ENCODE measurements at regions of chr12 and their contacts with region 1.

Region 1: GRCh38 chr12:21989819-21990412 is 48.7 kb upstream of the ABCC9 start:
- DNase-seq: peak; percentile 41
- H3K4me3 ChIP-seq: no peak overlapping the region
- H3K27ac ChIP-seq: no peak overlapping the region
- H3K4me1 ChIP-seq: peaks cover 9% of the 10 kb centered on the region
- H3K27me3 ChIP-seq: peaks cover 0 to 3% of the 10 kb centered on the region in 2 experiments
- CTCF ChIP-seq: peak; percentile 28 to 38
- POLR2A ChIP-seq: no peak

Region 2: GRCh38 chr12:21248679-21249078 is 741.2 kb before region 1 on chr12:
- CTCF ChIA-PET with region 1: interaction called, 11 read pairs
- POLR2A ChIA-PET with region 1: no interaction called
- dilution Hi-C with region 1: no loop called
- intact Hi-C with region 1: no loop called
- DNase-seq: peak; percentile 22
- H3K4me3 ChIP-seq: no peak overlapping the region
- H3K27ac ChIP-seq: no peak overlapping the region
- H3K4me1 ChIP-seq: no peaks in the 10 kb centered on the region
- H3K27me3 ChIP-seq: no peaks in the 10 kb centered on the region
- CTCF ChIP-seq: no peak
- POLR2A ChIP-seq: no peak

Region 3: DNA sequence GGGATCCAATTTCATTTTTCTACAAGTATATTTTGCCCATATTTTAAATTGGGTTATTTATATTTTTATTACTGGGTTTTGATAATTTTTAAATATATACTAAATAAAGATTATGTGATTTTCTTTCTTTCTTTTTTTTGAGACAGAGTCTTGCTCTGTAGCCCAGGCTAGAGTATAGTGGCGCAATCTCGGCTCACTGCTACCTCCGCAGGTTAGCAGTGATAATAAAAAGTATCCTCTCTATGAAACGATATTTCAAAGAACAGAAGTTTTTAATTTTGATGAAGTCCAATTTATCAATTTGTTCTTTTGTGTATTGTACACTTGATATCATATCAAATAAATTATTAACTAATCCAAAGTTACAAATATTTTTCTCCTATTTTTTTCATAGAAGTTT is 285.1 kb before region 1 on chr12:
- CTCF ChIA-PET with region 1: interaction called, 517 read pairs
- POLR2A ChIA-PET with region 1: no interaction called
- dilution Hi-C with region 1: no loop called
- intact Hi-C with region 1: no loop called
- DNase-seq: no peak
- H3K4me3 ChIP-seq: no peak overlapping the region
- H3K27ac ChIP-seq: no peak overlapping the region
- H3K4me1 ChIP-seq: no peaks in the 10 kb centered on the region
- H3K27me3 ChIP-seq: peaks cover 2 to 5% of the 10 kb centered on the region in 2 experiments
- CTCF ChIP-seq: no peak
- POLR2A ChIP-seq: no peak

Region 4: DNA sequence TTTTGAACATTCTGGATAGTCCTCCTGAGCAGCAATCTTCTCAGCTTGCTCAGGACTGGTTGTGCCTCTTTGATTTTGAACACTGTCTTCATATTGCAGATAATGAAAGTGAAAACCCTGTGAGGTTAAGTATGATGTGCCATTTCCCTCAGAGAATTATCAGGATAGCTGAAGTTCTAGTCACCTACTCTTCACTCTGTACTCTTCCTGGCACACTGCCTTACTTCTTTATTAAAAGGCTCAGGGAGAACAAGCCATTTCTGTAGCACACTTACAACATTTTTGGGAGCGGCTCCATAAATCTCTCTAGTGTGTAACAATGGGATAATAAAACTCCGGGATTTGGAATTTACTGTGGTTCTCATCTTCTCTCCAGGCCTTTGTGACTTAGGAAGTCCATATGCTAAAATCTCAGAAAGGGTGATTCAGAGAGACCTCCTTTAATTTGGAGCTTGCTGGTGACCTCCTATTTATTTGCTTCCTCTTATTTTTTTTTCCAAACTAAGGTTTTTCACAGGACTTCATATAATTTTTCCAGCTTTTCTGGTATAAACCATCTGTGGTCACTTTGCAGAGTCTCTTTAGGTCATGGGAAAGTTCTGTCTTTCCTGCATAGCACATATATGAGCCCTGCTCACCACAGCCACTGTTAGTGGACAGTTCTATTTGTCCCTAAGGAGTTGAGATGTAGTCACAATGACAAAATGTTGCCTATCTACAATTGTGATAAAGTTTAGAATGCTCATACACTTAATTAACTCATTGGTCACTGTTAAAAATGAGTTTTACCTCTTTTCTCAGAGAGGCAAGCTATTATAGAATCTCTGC is 278.8 kb before region 1 on chr12:
- CTCF ChIA-PET with region 1: interaction called, 11 read pairs
- POLR2A ChIA-PET with region 1: no interaction called
- dilution Hi-C with region 1: no loop called
- intact Hi-C with region 1: no loop called
- DNase-seq: no peak
- H3K4me3 ChIP-seq: no peak overlapping the region
- H3K27ac ChIP-seq: no peak overlapping the region
- H3K4me1 ChIP-seq: no peaks in the 10 kb centered on the region
- H3K27me3 ChIP-seq: no peaks in the 10 kb centered on the region
- CTCF ChIP-seq: no peak
- POLR2A ChIP-seq: no peak

Region 5: DNA sequence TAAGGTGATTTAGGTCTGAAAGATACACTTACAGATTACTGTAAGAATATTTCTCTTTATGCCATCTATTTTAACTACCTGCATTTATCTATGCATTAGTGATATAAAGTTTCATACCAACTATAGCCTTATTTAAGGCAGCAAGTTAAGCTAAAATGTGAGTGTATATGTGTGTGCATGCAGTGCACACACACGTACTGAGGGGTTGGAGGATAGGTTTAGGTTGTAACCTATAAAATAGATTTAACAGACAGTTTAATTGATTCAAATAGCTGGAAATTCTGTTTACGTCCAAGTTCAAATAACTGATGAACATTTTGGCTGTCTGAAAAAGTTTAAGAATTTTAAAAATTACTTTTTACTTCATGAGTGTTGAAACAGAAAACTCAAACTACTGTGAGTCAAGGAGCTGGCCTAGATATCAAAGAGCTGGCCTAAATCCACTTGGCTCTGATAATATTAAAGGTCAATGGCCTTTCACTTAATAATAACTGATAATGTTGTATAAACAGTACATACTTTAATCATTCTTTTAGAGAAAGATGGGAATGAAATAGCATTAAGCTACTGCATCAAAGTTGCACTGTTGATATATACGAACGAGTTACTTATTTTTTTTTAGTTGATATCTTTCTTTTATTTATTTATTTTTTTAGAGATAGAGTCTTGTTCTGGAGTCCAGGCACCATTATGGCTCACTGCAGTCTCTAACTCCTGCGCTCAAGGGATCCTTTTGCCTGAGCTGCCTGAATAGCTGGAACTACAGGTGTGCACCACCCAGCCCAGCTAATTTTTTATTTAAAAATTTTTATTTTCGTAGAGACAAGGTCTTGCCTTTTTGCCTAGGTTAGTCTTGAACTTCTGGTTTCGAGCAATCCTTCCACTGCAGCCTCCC is 201.6 kb before region 1 on chr12:
- CTCF ChIA-PET with region 1: no interaction called
- POLR2A ChIA-PET with region 1: no interaction called
- dilution Hi-C with region 1: no loop called
- intact Hi-C with region 1: no loop called
- DNase-seq: no peak
- H3K4me3 ChIP-seq: no peak overlapping the region
- H3K27ac ChIP-seq: no peak overlapping the region
- H3K4me1 ChIP-seq: no peaks in the 10 kb centered on the region
- H3K27me3 ChIP-seq: no peaks in the 10 kb centered on the region
- CTCF ChIP-seq: no peak
- POLR2A ChIP-seq: no peak

Region 6: DNA sequence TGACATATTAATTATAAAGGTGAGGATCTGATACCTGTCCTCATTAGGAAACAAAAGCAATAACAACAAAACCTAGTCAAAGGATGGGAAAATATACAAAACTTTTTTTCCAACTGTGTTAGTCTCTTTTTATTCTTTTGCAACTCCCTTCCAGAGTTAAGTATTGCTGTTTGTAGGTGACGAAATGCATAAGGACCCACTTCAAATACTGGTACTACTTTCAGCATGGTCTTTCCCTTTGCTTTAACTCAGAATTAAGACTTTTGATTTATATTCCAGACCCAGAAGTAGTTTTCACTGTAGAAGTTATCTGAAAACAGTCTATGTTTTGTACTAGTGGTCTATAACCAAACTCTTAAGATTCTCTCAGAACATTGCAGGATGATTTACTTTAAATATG is 14.6 kb before region 1 on chr12:
- CTCF ChIA-PET with region 1: interaction called, 16 read pairs
- POLR2A ChIA-PET with region 1: no interaction called
- dilution Hi-C with region 1: no loop called
- intact Hi-C with region 1: no loop called
- DNase-seq: no peak
- H3K4me3 ChIP-seq: no peak overlapping the region
- H3K27ac ChIP-seq: no peak overlapping the region
- H3K4me1 ChIP-seq: no peaks in the 10 kb centered on the region
- H3K27me3 ChIP-seq: no peaks in the 10 kb centered on the region
- CTCF ChIP-seq: no peak
- POLR2A ChIP-seq: no peak

Region 7: DNA sequence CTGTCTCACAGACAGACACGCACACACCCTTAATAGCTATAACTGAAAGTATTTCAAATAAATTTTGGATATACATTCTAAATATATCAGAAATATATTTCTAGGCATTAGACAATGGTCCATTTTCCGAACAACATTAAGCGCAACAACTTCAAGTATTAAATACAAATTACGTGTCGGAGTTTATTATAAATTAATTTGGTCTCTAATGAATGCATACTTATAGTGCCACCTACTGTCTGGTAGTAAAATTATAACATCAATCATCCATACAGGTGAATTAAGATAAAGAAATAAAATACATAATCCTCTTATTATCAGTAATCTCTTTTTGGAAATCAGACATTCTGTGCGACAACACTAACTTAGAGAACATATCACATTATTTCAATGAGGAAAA is 28.9 kb after region 1 on chr12:
- CTCF ChIA-PET with region 1: interaction called, 43 read pairs
- POLR2A ChIA-PET with region 1: no interaction called
- dilution Hi-C with region 1: no loop called
- intact Hi-C with region 1: no loop called
- DNase-seq: peak; percentile 28
- H3K4me3 ChIP-seq: no peak overlapping the region
- H3K27ac ChIP-seq: no peak overlapping the region
- H3K4me1 ChIP-seq: no peaks in the 10 kb centered on the region
- H3K27me3 ChIP-seq: no peaks in the 10 kb centered on the region
- CTCF ChIP-seq: peak in 1 of 2 donors; percentile 13
- POLR2A ChIP-seq: no peak

Region 8: DNA sequence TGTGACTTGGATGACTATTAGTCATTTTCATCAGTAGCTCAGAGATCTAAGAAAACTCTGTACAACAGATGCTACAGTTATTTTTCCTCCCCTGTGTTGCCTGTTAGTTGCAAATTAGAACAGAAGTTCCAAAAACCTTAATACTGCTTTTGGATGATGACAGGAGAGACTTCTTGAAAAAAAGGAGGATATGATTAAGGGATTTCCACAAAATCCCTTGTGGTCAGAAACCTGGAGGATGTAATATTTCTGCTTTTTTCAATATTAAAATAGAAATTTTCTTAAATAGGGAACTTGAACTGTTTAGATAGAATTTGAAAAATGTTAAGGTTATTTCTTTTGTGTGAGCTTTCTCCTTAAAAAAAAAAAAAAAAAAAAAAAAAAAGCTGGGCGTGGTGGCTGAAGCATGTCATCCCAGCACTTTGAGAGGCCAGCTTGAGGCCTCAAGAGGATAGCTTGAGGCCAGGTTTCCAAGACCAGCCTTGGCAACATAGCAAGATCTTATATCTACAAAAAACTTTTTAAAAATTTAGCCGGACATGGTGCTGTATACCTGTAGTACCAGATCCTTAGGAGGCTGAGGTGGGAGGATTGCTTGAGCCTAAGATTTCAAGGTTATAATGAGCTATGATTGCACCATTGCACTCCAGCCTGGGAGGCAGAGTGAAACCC is 70.2 kb after region 1 on chr12:
- CTCF ChIA-PET with region 1: no interaction called
- POLR2A ChIA-PET with region 1: no interaction called
- dilution Hi-C with region 1: no loop called
- intact Hi-C with region 1: no loop called
- DNase-seq: no peak
- H3K4me3 ChIP-seq: no peak overlapping the region
- H3K27ac ChIP-seq: no peak overlapping the region
- H3K4me1 ChIP-seq: no peaks in the 10 kb centered on the region
- H3K27me3 ChIP-seq: no peaks in the 10 kb centered on the region
- CTCF ChIP-seq: no peak
- POLR2A ChIP-seq: no peak

Region 9: GRCh38 chr12:22443379-22444316 is 453.7 kb after region 1 on chr12:
- CTCF ChIA-PET with region 1: interaction called, 9 read pairs
- POLR2A ChIA-PET with region 1: no interaction called
- dilution Hi-C with region 1: no loop called
- intact Hi-C with region 1: loop called (anchors 1 kb)
- DNase-seq: peak; percentile 67
- H3K4me3 ChIP-seq: no peak overlapping the region
- H3K27ac ChIP-seq: no peak overlapping the region
- H3K4me1 ChIP-seq: no peaks in the 10 kb centered on the region
- H3K27me3 ChIP-seq: peaks cover 0 to 4% of the 10 kb centered on the region in 2 experiments
- CTCF ChIP-seq: peak; percentile 58 to 67
- POLR2A ChIP-seq: no peak